Mammary epithelial cell (primary cell): ENCODE measurements at regions of chr15 and their contacts with region 1.

Region 1: GRCh38 chr15:64905119-64905831 is 6.4 kb upstream of the ANKDD1A start:
- DNase-seq: no peak
- H3K4me3 ChIP-seq: no peak overlapping the region
- H3K27ac ChIP-seq: no peak overlapping the region
- H3K4me1 ChIP-seq: no peaks in the 10 kb centered on the region
- H3K27me3 ChIP-seq: no peaks in the 10 kb centered on the region
- CTCF ChIP-seq: peak; percentile 59 to 68

Region 2: DNA sequence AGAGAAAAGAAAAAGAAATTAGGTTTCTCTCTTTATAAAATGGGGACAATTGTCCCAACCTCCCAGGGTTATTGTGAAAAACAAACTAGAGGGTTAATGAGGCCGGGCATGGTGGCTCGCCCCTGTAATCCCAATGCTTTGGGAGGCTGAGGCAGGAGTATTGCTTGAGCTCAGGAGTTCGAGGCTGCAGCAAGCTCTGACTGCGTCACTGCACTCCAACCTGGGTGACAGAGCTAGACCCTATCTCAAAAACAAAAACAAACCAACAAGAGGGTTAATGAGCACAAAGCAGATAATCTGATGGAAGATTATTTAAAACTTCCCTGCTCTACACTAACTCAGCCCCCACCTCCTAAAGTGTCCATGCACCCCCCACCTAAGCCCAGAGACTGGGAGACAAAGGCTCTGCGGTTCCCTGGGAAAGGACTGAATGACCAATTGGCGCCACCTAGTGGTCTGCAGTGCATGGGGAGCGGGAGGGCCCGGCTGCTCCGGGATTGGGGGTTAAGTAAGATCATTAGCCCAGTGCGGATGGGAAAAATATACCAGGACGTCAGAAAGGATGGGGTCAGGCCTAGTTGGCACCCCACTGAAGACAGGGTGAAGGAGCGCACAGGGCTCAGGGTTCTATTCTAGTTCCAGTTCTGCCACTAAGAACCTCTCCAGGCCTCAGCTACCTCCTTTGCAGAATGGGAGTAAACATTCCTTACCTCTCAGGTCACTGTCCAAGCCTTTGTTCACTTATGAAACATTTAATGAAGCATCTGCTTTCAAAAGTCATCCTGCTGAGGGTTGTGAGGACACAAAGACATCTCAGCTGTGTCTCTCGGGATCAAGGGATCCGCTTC is 95.4 kb before region 1 on chr15:
- CTCF ChIA-PET with region 1: no interaction called
- dilution Hi-C with region 1: no loop called
- in situ Hi-C with region 1: no loop called
- intact Hi-C with region 1: loop called (anchors 1 kb)
- DNase-seq: peak; percentile 41
- H3K4me3 ChIP-seq: no peak overlapping the region
- H3K27ac ChIP-seq: no peak overlapping the region
- H3K4me1 ChIP-seq: no peaks in the 10 kb centered on the region
- H3K27me3 ChIP-seq: no peaks in the 10 kb centered on the region
- CTCF ChIP-seq: peak; percentile 86 to 97

Region 3: DNA sequence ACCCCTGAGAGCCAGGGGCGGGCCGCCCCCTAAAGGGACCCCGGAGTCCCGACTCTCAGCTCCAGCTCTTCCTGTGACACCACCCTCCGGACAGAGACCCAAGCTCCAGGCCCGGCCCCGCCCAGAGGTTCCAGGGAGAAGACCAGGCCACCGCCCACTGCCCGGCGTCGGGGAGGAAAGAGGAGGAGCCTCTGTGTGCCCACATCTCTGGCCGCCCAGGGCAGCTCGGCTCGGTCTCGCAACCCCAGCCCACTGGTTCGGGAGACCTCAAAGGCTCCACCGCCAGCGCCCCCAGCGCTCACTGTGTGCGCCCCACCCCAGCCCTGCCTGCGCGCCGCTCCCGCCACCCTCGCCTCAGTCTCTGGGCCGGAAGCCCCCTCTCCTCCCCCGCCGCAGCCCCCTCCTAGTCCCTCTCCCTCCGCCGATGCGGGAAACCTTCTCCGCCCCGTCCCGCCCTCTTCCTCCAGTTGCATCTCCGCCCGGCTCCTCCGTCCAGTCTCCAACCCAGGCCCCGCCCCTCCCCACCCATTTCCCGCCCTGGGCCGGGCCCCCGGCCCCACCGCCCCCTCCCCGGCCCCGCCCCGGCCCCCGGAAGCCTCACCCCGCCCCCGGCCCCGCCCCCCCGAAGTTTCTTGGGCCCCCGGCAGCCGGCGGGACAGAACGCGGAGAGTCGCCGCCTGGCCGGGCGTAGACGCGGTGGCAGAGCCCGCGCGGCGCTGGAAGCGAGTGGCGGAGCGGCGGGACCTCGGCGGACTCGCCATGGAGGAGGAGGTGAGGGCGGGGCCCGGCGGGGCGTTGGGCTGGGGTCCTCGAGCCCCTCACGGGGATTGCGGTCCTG is 63.8 kb before region 1 on chr15 and contains the start of gene PLEKHO2:
- CTCF ChIA-PET with region 1: no interaction called
- dilution Hi-C with region 1: no loop called
- in situ Hi-C with region 1: no loop called
- intact Hi-C with region 1: loop called (anchors 1 kb)
- DNase-seq: peak; percentile 87
- H3K4me3 ChIP-seq: peak within 1 kb of the TSS; percentile 60 to 93 (median 86)
- H3K27ac ChIP-seq: peak within 1 kb of the TSS; percentile 61
- H3K4me1 ChIP-seq: peaks cover 36% of the 10 kb centered on the region
- H3K27me3 ChIP-seq: no peaks in the 10 kb centered on the region
- CTCF ChIP-seq: no peak
- total RNA-seq, gene PLEKHO2: 6.0 to 7.5 TPM